GM12878 (cell line): ENCODE measurements at regions of chr15 and their contacts with region 1.

Region 1: DNA sequence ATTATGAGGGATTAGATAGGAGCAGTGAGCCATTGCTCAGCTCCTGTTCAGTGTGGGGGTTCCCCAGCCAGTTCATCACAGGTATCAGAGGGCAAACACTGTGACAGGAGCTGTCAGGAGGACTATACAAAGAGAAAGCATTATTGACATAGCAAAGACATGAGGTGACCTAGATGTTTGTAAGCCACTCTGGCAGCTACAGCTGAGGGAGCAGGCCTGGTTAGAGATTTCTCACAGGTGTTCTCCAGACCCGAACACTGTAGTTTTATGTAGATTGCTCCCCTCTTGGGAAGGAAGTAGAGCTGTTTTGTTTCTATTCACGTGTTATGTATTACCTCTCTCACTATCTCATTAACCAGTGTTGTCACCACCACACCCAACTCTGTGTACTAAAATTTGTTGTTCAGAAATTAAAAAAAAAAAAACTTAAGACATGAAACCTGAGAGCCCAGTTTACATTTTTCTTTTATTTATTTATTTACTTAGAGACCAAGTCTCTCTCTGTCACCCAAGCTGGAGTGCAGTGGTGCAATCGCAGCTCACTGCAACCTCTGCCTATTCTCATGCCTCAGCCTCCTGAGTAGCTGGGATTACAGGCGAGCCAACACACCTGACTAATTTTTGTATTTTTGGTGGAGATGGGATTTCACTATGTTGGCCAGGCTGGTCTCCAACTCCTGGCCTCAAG is 123.7 kb downstream of the RBPMS2 start:
- DNase-seq: peak; percentile 82
- ATAC-seq: peak; percentile 96
- H3K4me3 ChIP-seq: peak overlapping the region; percentile 15; the same call in 1 of the 2 replicates
- H3K27ac ChIP-seq: peak overlapping the region; percentile 74
- H3K4me1 ChIP-seq: peaks cover 25% of the 10 kb centered on the region
- H3K27me3 ChIP-seq: no peaks in the 10 kb centered on the region
- CTCF ChIP-seq: no peak
- EP300 ChIP-seq: no peak
- POLR2A ChIP-seq: 0 out of 2 replicates have a peak, but pooled peaks have one; percentile 26
- RAD21 ChIP-seq: 0 out of 2 replicates have a peak, but pooled peaks have one; percentile 20

Region 2: DNA sequence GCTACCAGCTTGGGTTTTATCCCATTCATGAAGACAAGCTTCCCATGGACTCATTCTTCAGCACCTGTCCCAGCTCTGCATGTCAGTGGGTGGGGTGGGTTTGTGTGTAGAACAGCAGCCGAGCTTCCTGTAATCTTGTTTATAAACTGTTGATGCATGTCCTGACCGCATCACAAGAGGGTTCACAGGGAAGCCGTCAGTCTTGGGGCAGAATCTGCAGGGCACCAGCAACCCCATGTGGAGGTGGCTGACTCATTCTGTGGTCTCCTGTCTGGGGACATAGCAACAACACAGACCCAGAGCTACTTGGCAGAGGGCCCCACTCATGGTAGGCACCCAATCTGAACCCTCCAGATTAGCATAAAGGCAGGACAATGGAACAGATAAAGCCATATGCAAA is 641.0 kb before region 1 on chr15:
- CTCF ChIA-PET with region 1: no interaction called
- POLR2A ChIA-PET with region 1: no interaction called
- RAD21 ChIA-PET with region 1: no interaction called
- SMC1A ChIA-PET with region 1: no interaction called
- in situ Hi-C with region 1: no loop called
- intact Hi-C with region 1: no loop called
- DNase-seq: peak; percentile 96
- ATAC-seq: peak; percentile 98
- H3K4me3 ChIP-seq: no peak overlapping the region
- H3K27ac ChIP-seq: peak overlapping the region; percentile 76
- H3K4me1 ChIP-seq: peaks cover 32% of the 10 kb centered on the region
- H3K27me3 ChIP-seq: no peaks in the 10 kb centered on the region
- CTCF ChIP-seq: peak; percentile 36 to 71 (median 54)
- EP300 ChIP-seq: peak; percentile 61 to 78; a peak in 2 of 4 replicates
- POLR2A ChIP-seq: no peak
- RAD21 ChIP-seq: peak; percentile 77

Region 3: GRCh38 chr15:64387562-64388168 is 264.1 kb before region 1 on chr15 and contains the start of gene TRIP4:
- CTCF ChIA-PET with region 1: interaction called, 3 read pairs
- POLR2A ChIA-PET with region 1: no interaction called
- RAD21 ChIA-PET with region 1: interaction called, 13 read pairs
- SMC1A ChIA-PET with region 1: interaction called, 8 read pairs
- in situ Hi-C with region 1: no loop called
- intact Hi-C with region 1: no loop called
- DNase-seq: peak; percentile 92
- ATAC-seq: peak; percentile 100
- H3K4me3 ChIP-seq: peak within 1 kb of the TSS; percentile 92
- H3K27ac ChIP-seq: peak within 1 kb of the TSS; percentile 71
- H3K4me1 ChIP-seq: no peaks in the 10 kb centered on the region
- H3K27me3 ChIP-seq: no peaks in the 10 kb centered on the region
- CTCF ChIP-seq: no peak; a peak in 1 of 6 replicates
- EP300 ChIP-seq: 0 out of 4 replicates have a peak, but pooled peaks of 1 of the 2 experiments have one; percentile 11
- POLR2A ChIP-seq: peak; percentile 97
- RAD21 ChIP-seq: peak; percentile 51; the same call in 1 of the 2 replicates
- polyA plus RNA-seq, gene TRIP4: 20.0 to 23.8 TPM

Region 4: DNA sequence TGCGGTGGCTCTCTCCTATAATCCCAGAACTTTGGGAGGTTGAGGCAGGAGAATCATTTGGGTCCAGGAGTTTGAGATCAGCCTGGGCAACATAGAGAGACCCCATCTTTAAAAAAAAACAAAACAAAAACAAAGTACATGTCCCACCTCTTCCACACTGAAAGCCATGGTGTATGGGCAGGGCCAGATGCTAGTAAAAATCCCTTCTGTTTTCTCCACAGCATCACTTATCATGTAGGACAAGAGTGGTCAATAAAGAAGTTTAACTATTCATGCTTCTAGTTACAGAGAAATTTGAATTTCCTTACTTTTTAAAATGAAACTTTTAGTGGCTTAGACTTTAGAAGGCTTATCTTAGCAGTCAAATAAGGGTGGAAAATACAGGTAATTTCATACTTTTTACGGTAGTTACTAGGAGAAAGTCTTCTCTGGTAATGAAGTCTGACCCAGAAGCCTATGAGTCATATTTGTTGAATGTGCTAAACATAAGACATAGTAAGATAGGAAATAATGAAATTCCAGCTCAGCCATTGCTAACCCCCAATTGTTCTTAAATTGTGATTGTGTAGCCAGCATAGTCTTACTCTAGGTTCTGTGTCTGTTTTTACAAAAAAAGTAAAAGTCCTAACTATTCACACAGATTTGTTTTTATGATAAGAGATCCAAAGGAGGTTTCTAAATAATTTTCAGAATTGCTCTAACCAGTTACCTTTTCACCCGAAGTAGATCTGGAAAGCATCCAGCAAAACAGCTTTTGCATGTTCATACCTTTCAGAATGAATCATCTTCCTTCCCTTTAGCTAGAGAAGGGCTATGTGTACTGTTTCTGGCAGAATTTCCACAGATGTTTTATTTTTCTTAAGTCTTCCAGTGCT is 207.7 kb before region 1 on chr15:
- CTCF ChIA-PET with region 1: interaction called, 5 read pairs
- POLR2A ChIA-PET with region 1: interaction called, 3 read pairs
- RAD21 ChIA-PET with region 1: interaction called, 6 read pairs
- SMC1A ChIA-PET with region 1: interaction called, 10 read pairs
- in situ Hi-C with region 1: no loop called
- intact Hi-C with region 1: no loop called
- DNase-seq: no peak
- ATAC-seq: peak; percentile 78
- H3K4me3 ChIP-seq: peak overlapping the region; percentile 34; the same call in 1 of the 2 replicates
- H3K27ac ChIP-seq: peak overlapping the region; percentile 81
- H3K4me1 ChIP-seq: peaks cover 38% of the 10 kb centered on the region
- H3K27me3 ChIP-seq: no peaks in the 10 kb centered on the region
- CTCF ChIP-seq: no peak
- EP300 ChIP-seq: peak in 1 of 2 experiments; percentile 56; a peak in 1 of 4 replicates
- POLR2A ChIP-seq: no peak
- RAD21 ChIP-seq: 0 out of 2 replicates have a peak, but pooled peaks have one; percentile 20

Region 5: DNA sequence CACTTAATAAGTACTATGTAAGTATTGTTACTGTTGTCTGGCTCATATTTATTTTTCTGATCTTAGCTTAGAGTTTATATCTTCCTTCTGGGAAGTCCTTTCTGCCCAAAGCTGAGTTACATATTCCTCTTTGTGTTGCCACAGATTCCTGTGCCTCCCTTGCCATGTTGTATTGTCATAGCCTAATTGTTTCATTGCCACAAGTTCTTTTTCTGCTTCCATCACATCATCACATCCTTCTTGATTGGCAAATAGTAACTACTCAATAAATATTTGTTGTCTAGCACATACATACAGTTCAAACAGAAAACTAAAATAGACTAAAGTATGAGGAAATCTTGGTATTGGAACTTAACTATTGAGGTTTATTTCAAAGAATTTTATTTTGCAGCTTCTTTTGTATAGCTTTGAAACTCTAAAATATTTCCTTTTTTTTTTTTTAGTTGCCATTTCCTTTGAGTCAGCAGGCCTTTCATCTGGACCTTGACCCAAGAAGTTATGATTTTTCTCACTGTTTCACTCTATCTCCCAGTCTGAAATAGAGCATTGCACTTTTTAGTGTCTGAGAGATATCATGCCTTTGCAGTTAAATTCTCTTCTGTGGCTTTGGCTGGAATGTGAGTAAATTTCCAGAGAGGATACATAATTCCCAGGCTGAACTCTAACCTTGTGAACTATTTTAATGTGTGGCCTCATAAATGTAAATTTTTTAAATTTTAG is 93.1 kb before region 1 on chr15:
- CTCF ChIA-PET with region 1: no interaction called
- POLR2A ChIA-PET with region 1: no interaction called
- RAD21 ChIA-PET with region 1: interaction called, 12 read pairs
- SMC1A ChIA-PET with region 1: interaction called, 11 read pairs
- in situ Hi-C with region 1: no loop called
- intact Hi-C with region 1: no loop called
- DNase-seq: no peak
- ATAC-seq: peak; percentile 79
- H3K4me3 ChIP-seq: no peak overlapping the region
- H3K27ac ChIP-seq: peak overlapping the region; percentile 7; the same call in 1 of the 2 replicates
- H3K4me1 ChIP-seq: no peaks in the 10 kb centered on the region; the same call in 1 of the 2 replicates
- H3K27me3 ChIP-seq: no peaks in the 10 kb centered on the region
- CTCF ChIP-seq: no peak
- EP300 ChIP-seq: no peak
- POLR2A ChIP-seq: no peak
- RAD21 ChIP-seq: no peak

Region 6: GRCh38 chr15:64596701-64597476 is 54.8 kb before region 1 on chr15:
- CTCF ChIA-PET with region 1: interaction called, 6 read pairs
- POLR2A ChIA-PET with region 1: interaction called, 4 read pairs
- RAD21 ChIA-PET with region 1: interaction called, 10 read pairs
- SMC1A ChIA-PET with region 1: interaction called, 6 read pairs
- in situ Hi-C with region 1: no loop called
- intact Hi-C with region 1: no loop called
- DNase-seq: no peak
- ATAC-seq: peak; percentile 79
- H3K4me3 ChIP-seq: peak overlapping the region; percentile 53
- H3K27ac ChIP-seq: peak overlapping the region; percentile 74
- H3K4me1 ChIP-seq: peaks cover 10% of the 10 kb centered on the region
- H3K27me3 ChIP-seq: no peaks in the 10 kb centered on the region
- CTCF ChIP-seq: no peak
- EP300 ChIP-seq: no peak
- POLR2A ChIP-seq: no peak
- RAD21 ChIP-seq: no peak

Region 7: DNA sequence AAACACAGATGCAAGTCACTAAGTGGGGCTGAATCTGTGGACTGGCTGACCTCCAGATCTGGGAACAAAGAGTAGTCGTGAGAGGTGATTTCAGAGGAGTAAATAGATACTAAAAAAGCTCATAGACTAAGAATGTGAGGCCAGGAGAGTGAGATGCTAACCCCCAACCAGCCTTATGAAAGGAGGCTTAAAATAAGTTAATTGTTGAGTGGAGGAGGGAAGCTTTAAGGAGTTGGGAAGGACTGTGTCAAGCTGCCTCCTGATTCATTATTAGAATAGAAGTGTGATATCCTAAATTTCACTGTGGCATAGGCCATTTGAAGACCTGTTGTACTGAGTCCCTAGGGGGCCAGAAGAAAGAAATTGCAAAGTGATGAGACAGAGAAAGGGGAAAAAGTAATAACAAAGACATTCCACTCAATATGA is 16.0 kb after region 1 on chr15:
- CTCF ChIA-PET with region 1: interaction called, 14 read pairs
- POLR2A ChIA-PET with region 1: interaction called, 9 read pairs
- RAD21 ChIA-PET with region 1: interaction called, 31 read pairs
- SMC1A ChIA-PET with region 1: interaction called, 29 read pairs
- in situ Hi-C with region 1: no loop called
- intact Hi-C with region 1: no loop called
- DNase-seq: no peak
- ATAC-seq: no peak
- H3K4me3 ChIP-seq: no peak overlapping the region
- H3K27ac ChIP-seq: no peak overlapping the region
- H3K4me1 ChIP-seq: no peaks in the 10 kb centered on the region
- H3K27me3 ChIP-seq: no peaks in the 10 kb centered on the region
- CTCF ChIP-seq: no peak
- EP300 ChIP-seq: no peak
- POLR2A ChIP-seq: no peak
- RAD21 ChIP-seq: no peak